K562 (cell line): ENCODE measurements at regions of chr3 and their contacts with region 1.

Region 1: DNA sequence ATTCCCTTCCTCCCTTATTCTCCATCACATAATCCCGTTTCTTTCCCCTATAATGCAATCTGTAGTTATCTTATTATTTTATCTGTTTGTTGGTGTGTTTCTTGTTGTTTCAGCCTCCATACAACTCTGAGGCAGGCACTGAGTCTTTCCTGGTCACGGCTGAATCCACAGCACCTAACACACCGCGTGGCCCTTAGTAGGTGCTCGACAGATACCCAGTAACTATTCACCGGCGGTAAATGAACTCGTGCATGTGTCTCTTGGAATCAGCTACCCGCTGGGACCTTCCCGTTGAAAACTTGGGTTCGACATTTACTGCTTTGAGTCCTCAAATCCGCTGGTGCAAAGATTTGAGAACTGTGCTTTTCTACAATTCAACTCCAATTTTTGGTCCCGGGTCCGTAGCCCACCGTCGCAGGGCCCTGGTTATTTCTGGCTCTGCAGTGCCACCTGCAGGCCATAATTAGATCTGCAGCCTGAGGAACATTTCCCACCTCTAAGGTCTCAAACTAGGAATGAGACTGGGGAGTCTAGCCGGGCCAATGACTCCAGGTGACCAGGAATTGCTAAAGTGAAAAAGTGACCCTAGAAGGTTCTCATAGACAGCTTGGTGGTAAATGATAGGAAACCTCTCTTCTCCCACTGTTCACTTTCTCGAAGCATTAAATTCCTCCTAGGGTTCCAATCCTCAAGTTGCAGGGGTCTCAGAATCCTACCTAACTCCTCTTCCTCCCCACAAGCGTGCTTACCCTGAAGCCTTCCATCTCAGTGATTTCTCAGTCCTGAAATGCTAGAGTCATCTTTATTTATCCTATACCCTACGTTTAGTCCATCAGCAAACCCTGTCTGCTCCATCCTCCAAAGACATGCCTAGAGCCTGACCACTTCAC is 40.0 kb upstream of the TRH start:
- DNase-seq: peak; percentile 35 to 59 (median 54)
- ATAC-seq: peak; percentile 73
- H3K4me3 ChIP-seq: peak overlapping the region; percentile 9
- H3K27ac ChIP-seq: no peak overlapping the region
- H3K4me1 ChIP-seq: peaks cover 0 to 5% of the 10 kb centered on the region in 2 experiments; a peak in 2 of 5 replicates
- H3K27me3 ChIP-seq: peaks cover 0 to 5% of the 10 kb centered on the region in 2 experiments; a peak in 1 of 5 replicates
- CTCF ChIP-seq: peak; percentile 63 to 84 (median 74)
- EP300 ChIP-seq: no peak
- POLR2A ChIP-seq: no peak
- RAD21 ChIP-seq: peak; percentile 65 to 77

Region 2: GRCh38 chr3:129383292-129383860 is 551.1 kb before region 1 on chr3:
- CTCF ChIA-PET with region 1: no interaction called
- POLR2A ChIA-PET with region 1: no interaction called
- in situ Hi-C with region 1: no loop called
- intact Hi-C with region 1: loop called (anchors 2 kb)
- DNase-seq: peak; percentile 66 to 76 (median 70)
- ATAC-seq: peak; percentile 96
- H3K4me3 ChIP-seq: no peak overlapping the region
- H3K27ac ChIP-seq: no peak overlapping the region
- H3K4me1 ChIP-seq: peaks cover 0 to 2% of the 10 kb centered on the region in 2 experiments; a peak in 3 of 5 replicates
- H3K27me3 ChIP-seq: no peaks in the 10 kb centered on the region
- CTCF ChIP-seq: peak; percentile 75 to 80 (median 79)
- EP300 ChIP-seq: no peak
- POLR2A ChIP-seq: no peak
- RAD21 ChIP-seq: peak; percentile 64 to 80; a peak in 3 of 4 replicates

Region 3: DNA sequence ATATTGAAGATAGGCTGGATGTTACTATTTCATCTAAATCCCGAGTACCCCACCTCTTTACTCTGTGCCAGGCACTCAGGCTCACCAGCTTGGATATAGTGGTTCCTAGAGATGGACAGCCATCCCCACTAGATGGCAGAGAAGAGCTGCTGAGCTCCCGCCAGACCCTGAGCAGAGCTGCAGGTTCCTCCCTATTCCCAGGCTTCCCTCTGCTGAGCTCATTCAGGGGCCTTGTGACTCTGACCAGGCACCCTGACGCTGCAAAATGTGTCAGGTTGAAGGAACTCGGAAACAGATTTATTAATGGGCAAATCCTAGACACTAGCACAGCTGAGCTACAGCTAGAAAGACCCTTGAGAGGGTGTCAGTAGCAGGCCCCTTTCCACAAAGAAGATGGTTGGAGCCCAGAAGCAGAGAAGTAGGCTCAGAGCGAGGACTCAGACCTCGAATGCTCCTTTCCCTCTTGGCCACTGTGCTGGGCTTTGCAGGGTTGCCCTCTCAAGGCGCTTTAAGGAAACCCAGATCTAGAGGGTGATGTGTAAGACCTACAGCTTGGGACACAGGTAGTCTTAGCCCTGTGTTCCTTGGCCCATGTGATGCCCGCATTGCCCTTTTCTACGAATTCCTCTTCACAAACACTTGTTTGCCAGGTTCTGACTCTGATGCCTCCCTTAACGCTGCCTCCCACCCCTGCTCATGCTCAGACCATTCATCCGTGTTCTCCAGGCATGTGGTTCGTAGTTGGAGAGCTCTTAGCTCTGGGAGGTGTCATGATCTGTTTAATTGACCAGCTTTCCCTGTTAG is 444.0 kb before region 1 on chr3:
- CTCF ChIA-PET with region 1: no interaction called
- POLR2A ChIA-PET with region 1: no interaction called
- in situ Hi-C with region 1: loop called (anchors 10 kb)
- intact Hi-C with region 1: loop called (anchors 10 kb)
- DNase-seq: peak; percentile 72 to 84 (median 78)
- ATAC-seq: peak; percentile 100
- H3K4me3 ChIP-seq: no peak overlapping the region
- H3K27ac ChIP-seq: peak overlapping the region; percentile 40; the same call in 1 of the 3 replicates
- H3K4me1 ChIP-seq: peaks cover 2 to 6% of the 10 kb centered on the region in 2 experiments; a peak in 3 of 5 replicates
- H3K27me3 ChIP-seq: no peaks in the 10 kb centered on the region
- CTCF ChIP-seq: peak; percentile 75 to 86 (median 82)
- EP300 ChIP-seq: peak; percentile 56
- POLR2A ChIP-seq: no peak
- RAD21 ChIP-seq: peak; percentile 88 to 89

Region 4: GRCh38 chr3:129627429-129628168 is 306.9 kb before region 1 on chr3:
- CTCF ChIA-PET with region 1: interaction called, 11 read pairs
- POLR2A ChIA-PET with region 1: no interaction called
- in situ Hi-C with region 1: no loop called
- intact Hi-C with region 1: loop called (anchors 5 kb)
- DNase-seq: no peak
- ATAC-seq: no peak
- H3K4me3 ChIP-seq: peak overlapping the region; percentile 45; the same call in 1 of the 2 replicates
- H3K27ac ChIP-seq: no peak overlapping the region; the same call in 2 of the 3 replicates
- H3K4me1 ChIP-seq: peaks cover 5 to 51% of the 10 kb centered on the region in 2 experiments
- H3K27me3 ChIP-seq: no peaks in the 10 kb centered on the region
- CTCF ChIP-seq: peak; percentile 50 to 57 (median 52); a peak in 5 of 6 replicates
- EP300 ChIP-seq: no peak
- POLR2A ChIP-seq: no peak
- RAD21 ChIP-seq: peak; percentile 15 to 57; a peak in 2 of 4 replicates

Region 5: DNA sequence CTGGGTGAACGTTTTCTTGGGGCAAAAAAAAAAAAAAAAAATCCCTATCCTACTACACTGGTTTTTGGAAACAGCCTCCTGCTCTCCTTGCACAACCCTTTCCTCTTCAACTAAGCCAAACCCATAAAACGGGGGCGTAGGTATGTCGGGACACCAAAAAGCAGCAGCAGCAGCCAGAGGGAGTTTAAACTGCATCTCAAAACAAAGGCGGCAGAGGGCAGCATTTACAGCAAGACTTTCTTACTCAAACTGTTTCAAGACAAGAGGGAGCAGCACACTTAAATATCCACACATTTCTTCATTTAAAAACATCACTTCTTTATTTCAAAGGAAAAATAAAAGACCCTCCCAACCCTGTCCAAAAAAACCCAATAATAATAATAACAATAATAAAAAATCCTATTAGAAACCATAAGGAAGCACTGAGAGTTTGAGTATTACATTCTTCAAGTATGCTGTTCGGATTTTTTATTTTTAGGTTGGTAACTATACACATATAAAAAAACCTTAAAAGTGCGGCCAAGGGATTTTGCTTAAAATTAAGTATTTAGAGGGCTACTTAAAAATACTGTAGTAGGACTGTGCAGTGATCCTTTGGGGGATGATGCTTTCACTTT is 284.1 kb before region 1 on chr3:
- CTCF ChIA-PET with region 1: interaction called, 7 read pairs
- POLR2A ChIA-PET with region 1: no interaction called
- in situ Hi-C with region 1: no loop called
- intact Hi-C with region 1: loop called (anchors 1 kb)
- DNase-seq: peak; percentile 28 to 74 (median 59)
- ATAC-seq: peak; percentile 80
- H3K4me3 ChIP-seq: no peak overlapping the region
- H3K27ac ChIP-seq: no peak overlapping the region
- H3K4me1 ChIP-seq: no peaks in the 10 kb centered on the region
- H3K27me3 ChIP-seq: no peaks in the 10 kb centered on the region
- CTCF ChIP-seq: peak; percentile 68 to 86 (median 81)
- EP300 ChIP-seq: no peak
- POLR2A ChIP-seq: no peak
- RAD21 ChIP-seq: peak; percentile 77 to 87